Lower leg skin (tissue), 4 donors: ENCODE measurements at regions of chr3 and their contacts with region 1.

Region 1: DNA sequence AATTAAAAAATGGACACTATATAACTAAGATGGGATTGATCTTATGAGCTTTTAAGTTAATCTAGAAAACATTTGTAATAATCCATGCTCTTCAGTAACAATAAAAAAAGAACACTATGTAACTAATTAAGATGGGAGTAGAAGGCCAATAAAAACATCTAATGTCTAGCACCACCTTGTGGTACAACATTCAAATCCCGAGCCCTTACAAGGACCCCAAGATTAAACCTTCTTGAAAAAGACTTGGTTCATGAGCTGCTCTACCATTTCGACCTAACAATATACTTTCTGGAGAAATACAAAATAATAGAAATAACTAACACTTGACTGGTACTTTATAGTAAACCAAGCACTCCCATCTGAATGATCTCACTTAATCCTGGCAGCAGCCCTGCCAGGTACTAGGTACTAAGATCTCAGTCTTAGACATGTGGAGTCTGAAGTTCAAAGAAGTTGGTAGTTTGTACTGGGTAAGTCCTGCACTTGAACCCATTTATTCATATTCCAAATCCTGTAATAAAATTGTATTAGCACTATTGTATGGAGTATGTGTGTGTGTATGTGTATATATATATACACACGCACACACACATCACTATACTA is 21.8 kb downstream of the METTL6 start:
- DNase-seq: no peak
- H3K4me3 ChIP-seq: no peak overlapping the region
- CTCF ChIP-seq: no peak
- POLR2A ChIP-seq: no peak

Region 2: DNA sequence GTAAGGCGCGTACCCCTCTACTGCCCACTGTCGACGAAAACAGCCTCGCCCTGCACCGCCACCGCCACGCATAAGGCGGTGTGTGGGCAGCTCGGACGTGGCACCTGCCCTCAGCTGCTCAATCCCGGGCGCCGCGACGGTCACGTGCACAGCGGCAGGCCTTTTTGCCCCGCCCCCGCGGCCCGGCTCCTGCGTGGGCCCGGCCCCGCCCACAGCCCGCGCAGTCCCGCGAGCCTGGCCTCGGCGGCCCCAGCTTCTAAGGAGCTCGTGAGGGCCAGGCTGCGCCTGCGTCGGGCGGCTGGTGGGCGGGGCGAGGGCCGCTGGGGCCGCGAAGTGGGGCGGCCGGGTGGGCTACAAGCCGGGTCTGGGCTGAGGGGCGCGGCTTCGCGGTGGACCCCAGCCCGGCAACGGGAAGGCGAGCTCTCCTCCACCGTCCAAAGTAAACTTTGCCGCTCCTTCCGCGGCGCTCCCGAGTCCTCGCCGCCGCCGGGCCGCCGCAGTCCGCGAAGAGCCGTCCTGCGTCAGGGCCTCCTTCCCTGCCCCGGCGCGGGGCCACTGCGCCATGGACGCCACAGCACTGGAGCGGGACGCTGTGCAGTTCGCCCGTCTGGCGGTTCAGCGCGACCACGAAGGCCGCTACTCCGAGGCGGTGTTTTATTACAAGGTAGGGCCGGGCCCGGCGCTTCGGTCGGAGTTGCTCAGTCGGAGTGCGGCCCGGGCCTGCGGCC is 199.5 kb before region 1 on chr3 and contains the start of gene CAPN7:
- intact Hi-C with region 1: loop called (anchors 10 kb)
- DNase-seq: peak; percentile 91 to 98
- H3K4me3 ChIP-seq: peak within 1 kb of the TSS; percentile 78
- CTCF ChIP-seq: no peak
- POLR2A ChIP-seq: peak in 1 of 2 donors; percentile 80
- total RNA-seq, gene CAPN7: 44.0 to 80.5 (median 49.1) TPM

Region 3: GRCh38 chr3:15256861-15257341 is 148.6 kb before region 1 on chr3:
- intact Hi-C with region 1: no loop called
- DNase-seq: peak in 1 of 2 donors; percentile 83
- H3K4me3 ChIP-seq: no peak overlapping the region
- CTCF ChIP-seq: no peak
- POLR2A ChIP-seq: no peak

Region 4: GRCh38 chr3:15345608-15346137 is 59.9 kb before region 1 on chr3:
- intact Hi-C with region 1: no loop called
- DNase-seq: no peak
- H3K4me3 ChIP-seq: no peak overlapping the region
- CTCF ChIP-seq: no peak
- POLR2A ChIP-seq: no peak

Region 5: GRCh38 chr3:15542614-15543013 is 137.1 kb after region 1 on chr3:
- intact Hi-C with region 1: no loop called
- DNase-seq: no peak
- H3K4me3 ChIP-seq: no peak overlapping the region
- CTCF ChIP-seq: no peak
- POLR2A ChIP-seq: no peak

Region 6: DNA sequence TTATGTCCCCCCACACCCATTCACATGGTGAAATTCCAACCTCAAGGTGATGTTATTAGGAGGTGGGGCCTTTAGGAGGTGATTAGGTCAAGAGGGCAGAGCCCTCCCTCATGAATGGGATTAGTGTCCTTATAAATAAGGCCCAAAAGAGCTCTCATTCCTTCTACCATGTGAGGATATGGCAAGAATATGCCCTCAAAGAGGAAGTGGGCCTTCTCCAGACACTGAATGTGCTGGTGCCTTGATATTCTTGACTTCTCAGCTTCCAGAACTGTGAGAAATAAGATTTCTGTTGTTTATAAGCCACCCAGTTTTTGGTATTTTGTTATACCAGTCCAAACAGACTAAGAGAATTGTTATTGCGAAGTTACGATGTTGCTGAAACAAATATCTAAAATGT is 297.8 kb after region 1 on chr3:
- intact Hi-C with region 1: no loop called
- DNase-seq: no peak
- H3K4me3 ChIP-seq: no peak overlapping the region
- CTCF ChIP-seq: no peak
- POLR2A ChIP-seq: no peak

Region 7: DNA sequence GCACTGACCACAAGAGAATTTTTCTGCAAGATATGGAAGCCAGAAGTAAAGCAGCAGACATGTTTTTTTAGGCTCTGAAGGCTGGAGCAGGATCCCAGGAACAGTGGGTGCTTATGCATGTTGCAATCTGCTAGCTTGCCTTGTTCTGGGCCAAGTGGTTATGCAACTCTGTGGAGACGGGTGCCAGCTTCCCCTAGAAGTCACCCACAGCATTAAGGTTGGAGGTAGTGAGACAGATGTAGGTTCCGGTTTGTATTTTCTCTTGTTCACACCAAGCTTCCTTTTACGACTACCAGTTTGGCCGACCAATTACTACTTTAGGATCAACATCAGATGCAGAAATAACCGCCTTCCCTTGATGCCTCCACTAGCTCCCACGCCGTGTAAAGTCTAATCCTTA is 848.1 kb after region 1 on chr3:
- intact Hi-C with region 1: loop called (anchors 5 kb)
- DNase-seq: peak in 1 of 2 donors; percentile 58
- H3K4me3 ChIP-seq: no peak overlapping the region
- CTCF ChIP-seq: no peak
- POLR2A ChIP-seq: no peak